CD4-positive, alpha-beta T cell (primary cell): ENCODE measurements at regions of chr19 and their contacts with region 1.

Region 1: GRCh38 chr19:23395041-23395721 is at the start of gene ZNF91:
- DNase-seq: peak; percentile 82 to 98 (median 85)
- ATAC-seq: peak; percentile 94
- H3K4me3 ChIP-seq: peak within 1 kb of the TSS; percentile 90
- H3K4me3 Mint-ChIP-seq: peak within 1 kb of the TSS; percentile 96
- H3K27ac ChIP-seq: peak within 1 kb of the TSS; percentile 88 to 95
- H3K27ac Mint-ChIP-seq: peak within 1 kb of the TSS; percentile 96
- H3K4me1 ChIP-seq: peaks cover 29% of the 10 kb centered on the region
- H3K4me1 Mint-ChIP-seq: peaks cover 50% of the 10 kb centered on the region
- H3K27me3 ChIP-seq: no peaks in the 10 kb centered on the region
- H3K27me3 Mint-ChIP-seq: no peaks in the 10 kb centered on the region
- CTCF ChIP-seq: no peak
- total RNA-seq, gene ZNF91: 95.5 to 99.3 TPM

Region 2: DNA sequence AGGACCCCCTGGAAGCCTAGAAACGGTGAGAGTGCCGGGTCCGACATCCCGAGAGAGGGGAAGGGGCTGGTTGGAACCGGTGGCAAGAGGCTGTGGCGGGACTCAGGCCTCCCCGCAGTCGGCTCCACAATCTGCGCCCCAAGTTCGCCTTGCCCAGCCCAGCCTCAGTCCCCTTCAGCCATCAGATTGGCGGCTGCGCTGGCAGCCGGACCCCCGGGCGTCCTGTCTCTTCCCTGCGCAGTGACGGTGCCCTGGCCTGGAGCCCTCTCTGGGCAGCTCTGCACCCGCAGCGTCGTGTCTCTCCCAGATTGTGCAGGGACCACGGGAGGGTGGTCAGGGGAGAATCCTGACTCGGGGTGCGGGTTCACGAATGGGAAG is 760.7 kb before region 1 on chr19:
- CTCF ChIA-PET with region 1: no interaction called
- POLR2A ChIA-PET with region 1: interaction called, 13 read pairs
- intact Hi-C with region 1: loop called in 1 of 2 experiments (anchors 10 kb)
- DNase-seq: no peak
- ATAC-seq: peak; percentile 16
- H3K4me3 ChIP-seq: peak overlapping the region; percentile 65
- H3K4me3 Mint-ChIP-seq: peak overlapping the region; percentile 96
- H3K27ac ChIP-seq: no peak overlapping the region
- H3K27ac Mint-ChIP-seq: peak overlapping the region; percentile 83
- H3K4me1 ChIP-seq: no peaks in the 10 kb centered on the region
- H3K4me1 Mint-ChIP-seq: peaks cover 16% of the 10 kb centered on the region
- H3K27me3 ChIP-seq: peaks cover 0 to 2% of the 10 kb centered on the region in 2 experiments
- H3K27me3 Mint-ChIP-seq: no peaks in the 10 kb centered on the region
- CTCF ChIP-seq: no peak

Region 3: DNA sequence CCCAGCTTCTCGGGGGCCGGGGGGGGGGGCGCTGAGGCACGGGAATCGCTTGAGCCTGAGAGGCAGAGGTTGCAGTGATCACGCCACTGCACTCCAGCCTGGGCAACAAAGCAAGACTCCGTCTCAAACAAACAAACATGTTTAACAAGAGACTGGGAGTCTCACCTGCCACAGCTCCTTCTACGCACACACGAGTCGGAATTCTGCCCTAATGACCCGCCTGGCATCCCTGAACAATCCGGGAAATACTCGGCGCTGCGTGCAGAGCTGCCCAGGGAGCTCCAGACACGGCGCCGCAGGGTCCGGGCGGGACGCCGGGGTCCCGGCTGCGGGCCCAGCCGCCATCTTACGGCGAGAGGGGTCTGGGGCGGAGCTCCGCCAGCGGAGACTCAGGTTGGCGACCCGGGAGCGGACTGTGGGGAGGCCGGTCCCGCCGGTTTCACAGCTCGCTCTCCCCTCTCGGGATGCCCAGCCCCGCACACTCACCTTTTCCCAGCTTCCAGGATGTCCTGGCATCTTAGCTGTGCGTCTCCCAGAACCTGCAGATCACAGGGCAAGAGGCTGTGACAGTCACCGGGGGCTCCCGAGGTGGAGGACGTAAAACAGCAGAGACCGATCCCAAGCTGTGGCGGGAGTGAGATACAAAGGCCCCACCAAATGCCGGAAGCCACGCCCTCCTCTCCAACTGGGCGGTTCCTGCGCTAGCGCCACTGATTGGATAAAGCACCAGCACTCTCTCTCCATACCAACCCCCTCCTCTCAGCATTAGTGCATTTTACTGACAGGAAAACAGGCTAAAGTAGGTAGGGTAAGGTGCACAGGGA is 121.4 kb before region 1 on chr19:
- CTCF ChIA-PET with region 1: no interaction called
- POLR2A ChIA-PET with region 1: interaction called, 48 read pairs
- intact Hi-C with region 1: loop called in 1 of 2 experiments (anchors 5 kb)
- DNase-seq: peak; percentile 80 to 96 (median 90)
- ATAC-seq: peak; percentile 98
- H3K4me3 ChIP-seq: peak overlapping the region; percentile 98
- H3K4me3 Mint-ChIP-seq: peak overlapping the region; percentile 99
- H3K27ac ChIP-seq: peak overlapping the region; percentile 72 to 88
- H3K27ac Mint-ChIP-seq: peak overlapping the region; percentile 97
- H3K4me1 ChIP-seq: peaks cover 11% of the 10 kb centered on the region
- H3K4me1 Mint-ChIP-seq: peaks cover 32% of the 10 kb centered on the region
- H3K27me3 ChIP-seq: no peaks in the 10 kb centered on the region
- H3K27me3 Mint-ChIP-seq: no peaks in the 10 kb centered on the region
- CTCF ChIP-seq: no peak

Region 4: GRCh38 chr19:23686621-23687423 is 291.6 kb after region 1 on chr19 and contains the start of gene ZNF675:
- CTCF ChIA-PET with region 1: no interaction called
- POLR2A ChIA-PET with region 1: interaction called, 39 read pairs
- intact Hi-C with region 1: loop called (anchors 5 to 10 kb)
- DNase-seq: peak; percentile 76 to 95 (median 84)
- ATAC-seq: peak; percentile 96
- H3K4me3 ChIP-seq: peak within 1 kb of the TSS; percentile 77
- H3K4me3 Mint-ChIP-seq: peak within 1 kb of the TSS; percentile 100
- H3K27ac ChIP-seq: peak within 1 kb of the TSS; percentile 79 to 82
- H3K27ac Mint-ChIP-seq: peak within 1 kb of the TSS; percentile 99
- H3K4me1 ChIP-seq: peaks cover 19% of the 10 kb centered on the region
- H3K4me1 Mint-ChIP-seq: peaks cover 49% of the 10 kb centered on the region
- H3K27me3 ChIP-seq: no peaks in the 10 kb centered on the region
- H3K27me3 Mint-ChIP-seq: no peaks in the 10 kb centered on the region
- CTCF ChIP-seq: no peak
- total RNA-seq, gene ZNF675: 15.6 to 16.4 TPM

Region 5: DNA sequence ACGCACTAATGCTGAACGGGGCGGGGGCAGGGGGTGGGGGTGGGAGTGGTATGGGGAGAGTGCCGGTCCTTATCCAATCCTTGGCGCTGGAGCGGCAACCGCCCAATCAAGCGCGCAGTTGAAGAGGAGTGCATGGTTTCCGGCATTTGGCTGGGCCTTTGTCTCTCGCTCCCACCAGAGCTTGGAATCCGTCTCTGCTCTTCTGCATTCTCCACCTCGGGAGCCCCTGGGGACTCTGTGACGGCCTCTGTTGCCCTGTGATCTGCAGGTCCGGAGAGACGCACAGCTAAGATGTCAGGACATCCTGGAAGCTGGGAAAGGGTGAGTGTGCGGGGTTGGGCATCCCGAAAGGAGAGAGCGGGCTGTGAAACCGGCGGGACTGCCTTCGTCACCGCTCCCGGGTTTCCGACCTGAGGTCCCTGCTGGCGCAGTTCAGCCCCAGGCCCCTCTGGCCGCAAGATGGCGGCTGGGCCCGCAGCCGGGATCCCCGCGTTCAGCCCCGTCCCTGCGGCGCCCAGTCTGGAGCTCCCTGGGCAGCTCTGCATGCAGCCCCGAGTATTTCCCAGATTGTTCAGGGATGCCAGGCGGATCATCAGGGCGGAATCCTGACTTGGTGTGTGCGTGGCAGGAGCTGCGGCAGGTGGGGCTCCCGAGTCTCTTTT is 638.3 kb after region 1 on chr19:
- CTCF ChIA-PET with region 1: no interaction called
- POLR2A ChIA-PET with region 1: interaction called, 25 read pairs
- intact Hi-C with region 1: loop called (anchors 2 to 5 kb)
- DNase-seq: peak; percentile 65 to 92 (median 77)
- ATAC-seq: peak; percentile 99
- H3K4me3 ChIP-seq: peak overlapping the region; percentile 99
- H3K4me3 Mint-ChIP-seq: peak overlapping the region; percentile 100
- H3K27ac ChIP-seq: peak overlapping the region; percentile 66 to 85
- H3K27ac Mint-ChIP-seq: peak overlapping the region; percentile 94
- H3K4me1 ChIP-seq: peaks cover 51% of the 10 kb centered on the region
- H3K4me1 Mint-ChIP-seq: peaks cover 47% of the 10 kb centered on the region
- H3K27me3 ChIP-seq: no peaks in the 10 kb centered on the region
- H3K27me3 Mint-ChIP-seq: no peaks in the 10 kb centered on the region
- CTCF ChIP-seq: no peak